Activated CD8-positive, alpha-beta T cell treated with anti-CD3 and anti-CD28 coated beads, Interleukin-2, amount 10 ng/mL, durations not matched to agents 7 days and 5 days (primary cell): ENCODE measurements at regions of chr22 and their contacts with region 1.

Region 1: DNA sequence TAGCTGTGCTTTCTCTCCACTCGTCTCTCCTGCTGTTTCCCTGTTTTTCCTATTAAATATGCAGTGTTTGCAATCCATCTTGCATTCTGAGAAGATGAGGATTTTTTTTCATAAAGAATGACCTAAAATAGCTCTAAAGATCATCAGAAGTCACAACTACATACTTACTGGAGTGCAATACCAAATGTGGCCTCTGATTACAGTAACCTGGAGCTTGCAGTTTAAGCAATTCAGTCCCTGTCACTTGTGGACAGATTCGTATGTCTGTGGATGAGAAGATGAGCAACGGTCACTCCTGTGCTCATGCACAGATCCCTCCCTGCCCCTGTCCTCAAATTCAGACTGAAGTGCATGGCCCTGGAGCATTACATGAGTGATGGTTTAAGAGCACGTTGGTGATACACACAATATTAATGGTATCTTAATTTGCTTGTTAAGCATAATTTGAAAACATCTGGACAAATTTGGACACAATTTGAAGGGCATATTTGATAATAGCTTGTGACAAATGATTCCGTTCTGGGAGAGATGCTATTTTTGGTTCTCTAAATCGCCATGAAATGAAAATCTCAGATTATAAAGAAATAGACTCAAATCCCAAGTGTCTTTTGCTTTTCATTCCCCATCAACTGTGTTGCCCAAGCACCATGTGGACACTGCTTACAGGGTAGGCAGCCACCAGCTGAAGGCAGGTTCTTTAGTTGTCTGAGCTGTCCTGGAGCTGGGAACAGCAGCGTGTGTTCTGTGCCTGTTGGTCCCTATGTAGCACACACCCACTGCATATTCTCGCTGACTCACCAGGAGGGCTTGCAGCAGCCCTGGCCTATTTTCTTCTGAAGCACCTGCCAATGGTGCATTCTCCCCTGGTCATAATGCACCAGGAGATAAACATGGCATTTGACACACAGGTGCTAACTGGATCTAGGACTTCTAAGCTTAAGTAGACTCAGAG is 32.6 kb upstream of the PRAME start:
- DNase-seq: no peak
- ATAC-seq: no peak
- H3K4me3 Mint-ChIP-seq: no peak overlapping the region
- H3K27ac Mint-ChIP-seq: no peak overlapping the region
- H3K4me1 Mint-ChIP-seq: no peaks in the 10 kb centered on the region
- H3K27me3 Mint-ChIP-seq: peaks cover 16% of the 10 kb centered on the region

Region 2: GRCh38 chr22:22576244-22576988 is 15.2 kb before region 1 on chr22:
- CTCF ChIA-PET with region 1: interaction called, 43 read pairs
- POLR2A ChIA-PET with region 1: no interaction called
- DNase-seq: peak; percentile 35
- ATAC-seq: no peak
- H3K4me3 Mint-ChIP-seq: no peak overlapping the region
- H3K27ac Mint-ChIP-seq: no peak overlapping the region
- H3K4me1 Mint-ChIP-seq: no peaks in the 10 kb centered on the region
- H3K27me3 Mint-ChIP-seq: peaks cover 14% of the 10 kb centered on the region

Region 3: DNA sequence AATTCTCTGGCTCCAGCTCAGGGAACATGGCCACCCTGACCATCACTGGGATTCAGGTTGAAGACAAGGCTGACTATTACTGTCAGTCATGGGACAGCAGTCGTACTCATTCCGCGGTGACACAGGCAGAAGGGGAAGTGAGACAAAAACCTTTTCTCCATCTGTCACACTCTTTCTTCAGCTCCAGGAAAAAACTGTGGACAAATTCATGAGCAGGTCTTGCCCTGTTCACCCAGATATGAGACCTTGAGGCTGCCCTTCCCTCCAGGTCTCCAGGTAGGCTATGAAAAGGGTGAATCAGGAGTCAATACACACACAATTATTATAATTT is 13.4 kb after region 1 on chr22:
- CTCF ChIA-PET with region 1: interaction called, 10 read pairs
- POLR2A ChIA-PET with region 1: no interaction called
- DNase-seq: no peak
- ATAC-seq: no peak
- H3K4me3 Mint-ChIP-seq: no peak overlapping the region
- H3K27ac Mint-ChIP-seq: no peak overlapping the region
- H3K4me1 Mint-ChIP-seq: no peaks in the 10 kb centered on the region
- H3K27me3 Mint-ChIP-seq: peaks cover 2% of the 10 kb centered on the region